ENCODE measurements at regions of chr17 and their contacts with region 1.

Region 1: GRCh38 chr17:6775871-6776405 is at the start of gene FBXO39:
- DNase-seq: peak in 1 of 14 experiments; percentile 68
- ATAC-seq: no peak
- H3K4me3 ChIP-seq: no peak within 1 kb of the TSS
- H3K4me3 Mint-ChIP-seq: no peak within 1 kb of the TSS
- H3K27ac ChIP-seq: no peak within 1 kb of the TSS
- H3K27ac Mint-ChIP-seq: no peak within 1 kb of the TSS
- H3K4me1 ChIP-seq: peaks cover 7% of the 10 kb centered on the region
- H3K4me1 Mint-ChIP-seq: no peaks in the 10 kb centered on the region
- H3K27me3 ChIP-seq: peaks cover 14 to 26% of the 10 kb centered on the region in 2 experiments
- H3K27me3 Mint-ChIP-seq: peaks cover 19% of the 10 kb centered on the region
- CTCF ChIP-seq: no peak
- total RNA-seq, gene FBXO39: 0.36 to 0.71 TPM

Region 2: DNA sequence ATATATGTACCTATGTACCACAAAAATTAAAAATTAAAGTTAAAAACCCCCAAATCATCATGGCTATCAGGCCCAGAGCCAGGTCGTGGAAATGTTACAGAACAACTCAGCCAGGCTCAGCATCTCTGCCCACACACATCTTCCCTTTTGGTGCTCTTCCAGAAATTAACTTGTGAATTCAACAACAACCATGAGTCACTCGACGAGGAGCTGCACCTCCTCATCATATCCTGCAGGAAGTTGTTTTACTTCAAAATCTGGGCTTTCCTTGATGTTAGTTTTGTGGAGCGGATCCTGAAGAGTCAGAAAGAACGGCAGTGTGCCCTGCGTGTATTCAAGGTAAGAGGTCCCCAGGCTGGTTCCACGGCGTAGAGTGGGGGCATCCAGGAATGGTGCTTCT is 10.7 kb after region 1 on chr17:
- CTCF ChIA-PET with region 1: no interaction called
- POLR2A ChIA-PET with region 1: no interaction called
- intact Hi-C with region 1: loop called in 1 of 2 experiments (anchors 2 kb)
- DNase-seq: no peak
- ATAC-seq: no peak
- H3K4me3 ChIP-seq: no peak overlapping the region
- H3K4me3 Mint-ChIP-seq: no peak overlapping the region
- H3K27ac ChIP-seq: no peak overlapping the region
- H3K27ac Mint-ChIP-seq: no peak overlapping the region
- H3K4me1 ChIP-seq: no peaks in the 10 kb centered on the region
- H3K4me1 Mint-ChIP-seq: peaks cover 13% of the 10 kb centered on the region
- H3K27me3 ChIP-seq: peaks cover 10 to 31% of the 10 kb centered on the region in 2 experiments
- H3K27me3 Mint-ChIP-seq: peaks cover 65% of the 10 kb centered on the region
- CTCF ChIP-seq: no peak